OCI-LY7 (cell line): ENCODE measurements at regions of chr1 and their contacts with region 1.

Region 1: DNA sequence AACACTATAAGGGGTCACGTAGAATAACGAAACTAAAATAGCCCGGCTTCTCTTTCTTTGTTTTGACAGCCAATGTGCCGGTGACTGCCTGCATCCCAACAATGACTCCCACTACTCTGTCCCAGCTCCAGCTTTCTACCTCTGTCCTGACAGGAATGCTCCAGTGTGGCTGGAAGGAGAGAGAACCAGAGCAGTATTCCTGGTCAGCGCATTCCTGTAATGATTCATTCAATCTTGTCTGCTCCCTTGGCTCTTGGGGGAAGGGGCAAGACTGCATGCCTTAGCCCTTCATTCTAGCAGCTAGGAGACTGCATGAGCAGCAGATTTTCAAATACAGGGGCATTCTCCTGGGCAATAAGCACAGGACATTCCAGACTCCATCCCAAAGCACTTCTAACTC is 132.1 kb upstream of the PRMT6 start:
- DNase-seq: no peak
- H3K4me3 ChIP-seq: peak overlapping the region; percentile 57
- H3K27ac ChIP-seq: no peak overlapping the region
- H3K4me1 ChIP-seq: peaks cover 27% of the 10 kb centered on the region
- CTCF ChIP-seq: no peak

Region 2: DNA sequence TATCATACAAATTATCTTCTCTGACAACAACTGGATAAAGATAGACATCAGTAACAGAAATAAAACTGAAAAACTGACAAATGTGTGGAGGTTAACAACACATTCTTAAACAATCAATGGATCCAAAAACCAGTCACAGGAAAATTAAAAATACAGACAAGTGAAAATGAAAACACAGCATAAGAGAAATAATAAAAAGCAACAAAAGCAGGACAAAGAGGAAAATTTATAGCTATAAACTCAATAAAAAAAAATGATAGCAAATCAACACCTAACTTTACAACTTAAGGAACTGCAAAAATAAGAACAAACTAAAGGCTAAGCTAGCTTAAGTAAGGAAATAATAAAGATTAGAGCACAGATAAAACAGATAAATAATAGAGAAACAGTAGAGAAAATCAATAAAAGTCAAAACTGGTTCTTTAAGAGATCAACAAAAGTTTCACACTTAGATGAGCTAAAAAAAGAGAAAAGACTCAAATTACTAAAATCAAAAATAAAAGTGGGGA is 29.3 kb before region 1 on chr1:
- CTCF ChIA-PET with region 1: no interaction called
- POLR2A ChIA-PET with region 1: no interaction called
- intact Hi-C with region 1: no loop called
- DNase-seq: no peak
- H3K4me3 ChIP-seq: no peak overlapping the region
- H3K27ac ChIP-seq: no peak overlapping the region
- H3K4me1 ChIP-seq: no peaks in the 10 kb centered on the region
- CTCF ChIP-seq: no peak

Region 3: DNA sequence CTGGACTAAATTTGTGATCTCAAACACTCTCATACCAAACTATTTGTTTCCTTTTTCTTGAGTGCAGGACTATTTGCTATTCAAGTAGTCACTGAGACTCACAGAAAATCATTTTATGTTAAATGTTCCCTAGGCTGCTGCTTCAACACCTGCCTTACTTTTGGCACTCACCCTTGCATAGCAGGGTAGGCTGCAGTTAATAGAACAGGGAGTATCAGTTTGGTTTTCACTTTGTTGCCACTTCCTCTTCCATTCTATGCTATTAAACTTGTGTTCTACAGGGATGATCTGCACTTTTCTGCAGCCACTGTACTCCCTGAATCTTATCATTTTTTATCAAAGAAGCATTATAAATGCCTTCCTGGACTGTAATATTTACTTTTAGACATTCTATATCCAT is 16.6 kb before region 1 on chr1:
- CTCF ChIA-PET with region 1: no interaction called
- POLR2A ChIA-PET with region 1: interaction called, 8 read pairs
- intact Hi-C with region 1: loop called (anchors 2 kb)
- DNase-seq: peak; percentile 88
- H3K4me3 ChIP-seq: peak overlapping the region; percentile 46
- H3K27ac ChIP-seq: peak overlapping the region; percentile 95
- H3K4me1 ChIP-seq: peaks cover 28% of the 10 kb centered on the region
- CTCF ChIP-seq: no peak

Region 4: GRCh38 chr1:107183011-107183410 is 258.7 kb after region 1 on chr1:
- CTCF ChIA-PET with region 1: no interaction called
- POLR2A ChIA-PET with region 1: no interaction called
- intact Hi-C with region 1: no loop called
- DNase-seq: no peak
- H3K4me3 ChIP-seq: no peak overlapping the region
- H3K27ac ChIP-seq: no peak overlapping the region
- H3K4me1 ChIP-seq: no peaks in the 10 kb centered on the region
- CTCF ChIP-seq: no peak